Activated naive CD4-positive, alpha-beta T cell treated with anti-CD3 and anti-CD28 coated beads for 36 hours (primary cell): ENCODE measurements at regions of chr6 and their contacts with region 1.

Region 1: DNA sequence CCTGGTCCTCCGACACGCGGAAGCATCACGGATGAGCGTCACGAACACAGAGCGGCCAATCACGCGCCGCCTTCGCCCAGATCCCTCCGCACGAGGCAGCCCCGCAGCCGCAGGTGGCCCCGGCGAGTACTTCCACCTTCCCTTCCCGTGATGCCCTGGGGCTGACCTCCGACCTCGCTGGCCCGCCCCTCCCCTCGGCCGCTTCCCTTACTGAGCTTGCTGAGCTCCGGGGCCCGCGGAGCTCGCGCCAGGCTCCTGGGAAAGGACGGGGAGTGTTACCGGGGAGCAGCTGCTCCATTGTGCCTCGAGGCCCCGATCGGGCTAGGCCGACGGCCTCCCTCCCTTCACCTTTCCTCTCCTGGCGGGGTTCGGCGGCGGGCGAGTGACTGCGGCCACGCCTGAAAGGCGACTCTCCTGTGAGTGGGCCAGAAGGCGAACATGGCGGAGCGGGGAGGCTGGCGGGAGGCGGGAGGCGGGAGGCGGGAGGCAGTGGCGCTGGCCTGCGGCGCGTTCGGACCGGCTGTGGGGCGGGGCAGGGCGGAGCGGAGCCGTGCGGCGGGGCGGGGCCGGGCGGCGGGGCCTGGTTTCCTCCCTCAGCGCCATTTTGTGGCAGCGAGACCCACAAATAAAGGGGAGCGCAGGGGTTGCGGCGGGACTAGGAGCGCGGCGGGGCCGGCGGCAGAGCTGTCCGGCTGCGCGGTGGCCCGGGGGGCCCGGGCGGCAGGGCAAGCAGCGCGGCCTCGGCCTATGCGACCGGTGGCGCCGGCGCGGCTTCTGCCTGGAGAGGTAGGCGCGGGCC is at the start of gene WTAP:
- DNase-seq: peak; percentile 98
- H3K4me3 Mint-ChIP-seq: peak within 1 kb of the TSS; percentile 91
- H3K27ac Mint-ChIP-seq: peak within 1 kb of the TSS; percentile 95
- H3K4me1 Mint-ChIP-seq: peaks cover 50% of the 10 kb centered on the region
- H3K27me3 Mint-ChIP-seq: no peaks in the 10 kb centered on the region
- total RNA-seq, gene WTAP: 87.5 to 91.6 TPM

Region 2: GRCh38 chr6:159434410-159434809 is 292.7 kb before region 1 on chr6:
- CTCF ChIA-PET with region 1: no interaction called
- intact Hi-C with region 1: no loop called
- DNase-seq: no peak
- H3K4me3 Mint-ChIP-seq: no peak overlapping the region
- H3K27ac Mint-ChIP-seq: no peak overlapping the region
- H3K4me1 Mint-ChIP-seq: no peaks in the 10 kb centered on the region
- H3K27me3 Mint-ChIP-seq: peaks cover 3% of the 10 kb centered on the region

Region 3: DNA sequence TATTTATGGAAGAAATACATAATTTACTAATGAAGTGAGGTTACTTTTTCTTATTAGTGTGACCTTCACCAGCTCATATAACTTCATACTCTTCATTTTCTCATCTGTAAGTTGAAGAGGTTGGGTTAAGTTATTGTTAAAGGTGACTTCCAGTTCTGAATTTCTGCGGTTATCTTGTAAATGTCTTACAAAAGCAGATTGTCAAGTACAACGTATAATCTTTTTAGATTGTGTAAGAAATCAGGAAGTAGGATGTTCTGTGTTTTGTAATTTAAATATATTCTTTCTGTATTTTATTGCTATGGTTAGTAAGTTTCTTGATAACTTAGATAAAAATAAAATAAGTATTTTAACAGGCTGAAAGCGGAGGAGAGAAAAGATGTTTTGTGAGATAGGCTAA is 12.2 kb after region 1 on chr6:
- CTCF ChIA-PET with region 1: interaction called, 6 read pairs
- intact Hi-C with region 1: loop called (anchors 1 kb)
- DNase-seq: no peak
- H3K4me3 Mint-ChIP-seq: no peak overlapping the region
- H3K27ac Mint-ChIP-seq: no peak overlapping the region
- H3K4me1 Mint-ChIP-seq: peaks cover 38% of the 10 kb centered on the region
- H3K27me3 Mint-ChIP-seq: no peaks in the 10 kb centered on the region

Region 4: GRCh38 chr6:159761873-159762680 is 35.0 kb after region 1 on chr6 and contains the start of gene ACAT2:
- CTCF ChIA-PET with region 1: interaction called, 4 read pairs
- intact Hi-C with region 1: loop called (anchors 1 kb)
- DNase-seq: peak; percentile 97
- H3K4me3 Mint-ChIP-seq: peak within 1 kb of the TSS; percentile 96
- H3K27ac Mint-ChIP-seq: peak within 1 kb of the TSS; percentile 96
- H3K4me1 Mint-ChIP-seq: peaks cover 42% of the 10 kb centered on the region
- H3K27me3 Mint-ChIP-seq: no peaks in the 10 kb centered on the region
- total RNA-seq, gene ACAT2: 84.9 to 92.4 TPM

Region 5: DNA sequence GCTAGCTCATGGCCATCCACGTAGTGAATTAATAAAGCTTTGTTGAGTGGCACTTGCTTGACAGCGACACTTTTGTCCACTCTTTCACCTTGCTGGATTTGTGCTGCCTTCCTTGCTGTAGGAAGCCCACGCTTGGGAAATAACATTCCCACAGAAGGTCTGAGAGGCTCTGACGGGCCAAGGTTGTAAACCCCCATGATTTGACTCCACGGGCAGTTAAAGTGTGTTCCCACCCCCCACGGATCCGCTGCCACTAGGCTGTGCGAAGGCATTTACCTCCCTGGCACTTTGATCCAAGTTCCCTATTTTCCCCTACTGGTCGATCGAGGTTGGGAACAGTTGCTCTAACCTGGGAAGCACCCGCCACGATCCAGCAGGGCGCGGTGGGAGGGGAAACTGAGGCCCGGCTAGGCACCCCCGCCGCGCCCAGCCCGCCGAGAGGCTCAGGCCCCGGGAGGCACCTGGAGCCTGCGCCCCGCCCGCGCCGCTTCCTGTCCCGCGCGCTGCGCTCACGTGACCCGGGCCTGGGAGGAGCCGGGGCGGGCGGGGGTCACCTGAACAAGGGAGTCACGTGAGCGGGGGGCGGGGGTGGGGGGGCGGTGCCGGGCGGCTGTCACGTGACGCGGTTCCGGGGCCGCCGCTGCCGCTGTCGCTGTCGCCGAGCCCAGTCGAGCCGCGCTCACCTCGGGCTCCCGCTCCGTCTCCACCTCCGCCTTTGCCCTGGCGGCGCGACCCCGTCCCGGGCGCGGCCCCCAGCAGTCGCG is 241.5 kb after region 1 on chr6 and contains the start of gene IGF2R:
- CTCF ChIA-PET with region 1: no interaction called
- intact Hi-C with region 1: loop called (anchors 2 kb)
- DNase-seq: peak; percentile 94
- H3K4me3 Mint-ChIP-seq: peak within 1 kb of the TSS; percentile 87
- H3K27ac Mint-ChIP-seq: peak within 1 kb of the TSS; percentile 87
- H3K4me1 Mint-ChIP-seq: peaks cover 36% of the 10 kb centered on the region
- H3K27me3 Mint-ChIP-seq: no peaks in the 10 kb centered on the region
- total RNA-seq, gene IGF2R: 42.1 to 44.5 TPM